ENCODE measurements at regions of chr14 and their contacts with region 1.

Region 1: DNA sequence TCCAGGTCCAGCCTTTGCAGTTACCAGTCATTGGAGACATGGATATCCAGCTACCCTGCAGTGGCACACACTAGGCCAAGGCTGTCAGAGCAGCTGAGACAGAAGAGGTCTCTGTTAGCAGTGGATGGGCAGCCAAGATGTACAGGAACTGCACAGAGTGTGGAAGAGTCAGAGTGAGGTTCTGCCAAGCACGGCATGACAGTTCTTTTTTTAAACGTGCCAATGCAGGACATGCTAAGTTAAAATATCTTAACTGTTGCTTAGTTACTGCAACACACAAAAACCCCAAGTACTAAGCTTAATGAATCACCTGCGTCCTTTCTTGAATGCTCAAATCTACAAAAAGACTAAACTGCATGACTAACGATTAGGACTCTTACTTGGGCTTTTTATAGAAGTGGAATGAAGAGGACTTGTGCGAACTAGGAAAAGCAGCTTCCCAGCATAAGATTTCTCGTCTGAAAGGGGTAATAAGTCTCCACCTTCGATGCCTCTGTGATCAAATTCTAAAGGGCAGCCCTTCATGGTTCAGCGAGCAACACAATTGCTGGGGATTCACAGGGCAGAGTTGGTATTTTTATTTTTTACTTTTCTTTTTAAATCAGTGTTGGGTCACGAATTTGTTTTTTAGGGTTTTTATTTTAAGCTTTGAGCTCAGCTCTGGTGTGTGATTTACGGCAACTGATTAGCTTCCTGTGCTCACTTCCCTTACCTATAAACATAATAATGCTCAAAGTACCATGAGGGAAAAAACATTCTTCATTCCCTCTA is 20.6 kb downstream of the MAPK1IP1L start:
- DNase-seq: no peak
- ATAC-seq: peak; percentile 79
- H3K4me3 ChIP-seq: peak overlapping the region in 1 of 2 donors; percentile 41
- H3K27ac ChIP-seq: peak overlapping the region; percentile 82 to 99
- H3K4me1 ChIP-seq: peaks cover 5% of the 10 kb centered on the region in 2 donors
- H3K27me3 ChIP-seq: no peaks in the 10 kb centered on the region

Region 2: DNA sequence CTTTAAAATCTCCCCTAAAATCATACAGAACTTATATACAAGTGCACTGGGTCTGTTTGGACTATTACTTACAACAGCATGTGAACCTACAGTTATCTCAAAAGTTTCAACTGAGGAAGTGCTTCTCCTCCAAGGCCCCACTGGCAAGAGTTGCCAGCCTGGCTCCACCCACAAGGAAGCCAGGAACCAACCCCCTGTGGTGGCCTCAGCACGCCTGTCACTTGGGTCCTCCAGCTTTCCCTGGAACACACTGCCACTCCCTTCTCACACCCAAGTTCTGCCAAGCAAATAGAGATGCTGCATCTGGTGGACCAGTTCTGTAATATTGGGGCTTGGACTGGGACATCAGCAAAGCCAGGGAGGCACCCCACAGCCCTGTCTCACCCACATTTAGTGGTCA is 284.8 kb before region 1 on chr14:
- intact Hi-C with region 1: no loop called
- DNase-seq: no peak
- ATAC-seq: no peak
- H3K4me3 ChIP-seq: no peak overlapping the region
- H3K27ac ChIP-seq: no peak overlapping the region
- H3K4me1 ChIP-seq: peaks cover 0 to 3% of the 10 kb centered on the region in 2 donors
- H3K27me3 ChIP-seq: no peaks in the 10 kb centered on the region

Region 3: DNA sequence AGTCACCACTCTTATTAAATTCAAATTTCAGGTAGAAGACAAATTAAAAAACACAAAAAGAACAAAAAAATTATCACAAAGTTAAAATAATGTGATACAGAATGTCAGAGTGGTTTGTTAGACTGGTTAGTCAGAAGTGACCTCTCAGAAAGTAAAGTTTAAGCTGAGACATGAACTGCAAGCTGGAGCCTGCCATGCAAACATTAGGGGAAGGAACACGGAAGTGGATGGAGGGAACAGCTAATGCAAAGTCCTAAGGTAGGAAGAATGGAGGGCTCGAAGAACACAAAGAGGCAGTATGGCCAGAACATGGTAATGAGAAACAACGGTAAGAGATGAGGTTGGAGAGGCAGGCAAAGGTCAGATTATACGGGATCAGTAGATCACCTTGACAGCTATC is 86.9 kb before region 1 on chr14:
- intact Hi-C with region 1: no loop called
- DNase-seq: no peak
- ATAC-seq: no peak
- H3K4me3 ChIP-seq: no peak overlapping the region
- H3K27ac ChIP-seq: no peak overlapping the region
- H3K4me1 ChIP-seq: no peaks in the 10 kb centered on the region
- H3K27me3 ChIP-seq: no peaks in the 10 kb centered on the region

Region 4: GRCh38 chr14:55051426-55052268 is 20.4 kb before region 1 on chr14 and contains the start of gene MAPK1IP1L:
- intact Hi-C with region 1: loop called in 1 of 2 experiments (anchors 2 kb)
- DNase-seq: peak; percentile 94 to 97
- ATAC-seq: peak; percentile 100
- H3K4me3 ChIP-seq: peak within 1 kb of the TSS; percentile 54 to 97
- H3K27ac ChIP-seq: peak within 1 kb of the TSS; percentile 49 to 100
- H3K4me1 ChIP-seq: peaks cover 0 to 4% of the 10 kb centered on the region in 2 donors
- H3K27me3 ChIP-seq: no peaks in the 10 kb centered on the region
- total RNA-seq, gene MAPK1IP1L: 83.5 to 101 TPM

Region 5: DNA sequence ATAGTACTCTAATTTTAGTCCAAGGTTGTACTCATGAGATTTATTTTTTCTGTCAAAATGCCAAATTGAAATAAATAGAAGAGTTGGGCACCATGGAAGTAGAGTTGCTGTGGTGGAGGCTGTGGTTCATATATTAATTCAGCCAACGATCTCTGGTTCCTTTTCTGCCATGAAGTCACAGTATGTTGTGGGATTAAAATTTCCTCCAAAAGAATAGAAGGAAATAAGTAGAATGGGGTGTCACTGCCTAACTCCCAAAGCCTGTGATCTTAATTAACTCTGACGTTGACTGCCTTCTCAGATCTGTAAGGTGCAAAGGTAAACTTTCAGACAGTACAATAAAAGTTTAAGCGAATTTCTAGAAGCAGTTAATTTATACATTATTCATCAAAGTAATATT is 161.5 kb after region 1 on chr14:
- intact Hi-C with region 1: no loop called
- DNase-seq: no peak
- ATAC-seq: no peak
- H3K4me3 ChIP-seq: no peak overlapping the region
- H3K27ac ChIP-seq: no peak overlapping the region
- H3K4me1 ChIP-seq: no peaks in the 10 kb centered on the region
- H3K27me3 ChIP-seq: no peaks in the 10 kb centered on the region

Region 6: DNA sequence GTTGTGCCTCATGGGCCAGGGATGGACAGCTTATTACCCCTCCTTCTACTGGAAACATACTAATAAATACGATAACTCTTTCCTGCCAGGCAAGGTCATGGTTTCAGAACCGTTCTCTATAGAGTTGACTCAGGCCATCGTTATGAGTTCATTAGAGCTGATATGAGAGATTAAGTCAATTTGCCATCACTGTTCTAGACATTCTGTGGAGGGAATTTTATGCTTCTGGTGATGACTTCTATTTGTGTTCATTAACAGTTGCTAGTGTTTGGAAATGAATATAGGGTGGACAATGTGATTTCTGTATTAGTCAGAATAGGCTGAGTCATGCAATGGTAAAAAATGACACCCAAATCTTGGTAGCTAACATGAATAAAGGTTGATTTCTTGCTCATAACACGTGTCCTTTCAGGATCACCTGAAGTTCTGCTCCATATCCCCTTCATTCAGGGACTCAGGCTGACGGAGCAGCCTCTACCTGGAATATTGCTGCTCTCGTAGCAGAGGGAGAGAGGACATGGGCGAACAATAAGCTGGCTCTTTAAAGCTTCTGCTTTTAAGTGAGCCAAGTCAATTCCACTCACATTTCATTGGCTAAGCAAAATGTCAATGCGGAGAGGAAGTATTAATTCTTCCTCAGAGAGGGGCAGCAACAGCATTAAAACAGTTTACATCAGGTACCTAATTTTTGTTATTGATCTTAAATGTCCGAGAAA is 386.9 kb after region 1 on chr14:
- intact Hi-C with region 1: no loop called
- DNase-seq: no peak
- ATAC-seq: no peak
- H3K4me3 ChIP-seq: no peak overlapping the region
- H3K27ac ChIP-seq: no peak overlapping the region
- H3K4me1 ChIP-seq: no peaks in the 10 kb centered on the region
- H3K27me3 ChIP-seq: no peaks in the 10 kb centered on the region